Activated CD4-positive, alpha-beta memory T cell treated with anti-CD3 and anti-CD28 coated beads, Interleukin-2, amount 10 ng/mL, durations not matched to agents 7 days and 5 days (primary cell): ENCODE measurements at regions of chr17 and their contacts with region 1.

Region 1: GRCh38 chr17:74748529-74749365 is at the start of gene NHERF1:
- DNase-seq: peak; percentile 96
- H3K4me3 Mint-ChIP-seq: peak within 1 kb of the TSS; percentile 94
- H3K27ac Mint-ChIP-seq: peak within 1 kb of the TSS; percentile 85
- H3K4me1 Mint-ChIP-seq: peaks cover 61% of the 10 kb centered on the region
- H3K27me3 Mint-ChIP-seq: no peaks in the 10 kb centered on the region
- total RNA-seq, gene NHERF1: 320 to 328 TPM

Region 2: DNA sequence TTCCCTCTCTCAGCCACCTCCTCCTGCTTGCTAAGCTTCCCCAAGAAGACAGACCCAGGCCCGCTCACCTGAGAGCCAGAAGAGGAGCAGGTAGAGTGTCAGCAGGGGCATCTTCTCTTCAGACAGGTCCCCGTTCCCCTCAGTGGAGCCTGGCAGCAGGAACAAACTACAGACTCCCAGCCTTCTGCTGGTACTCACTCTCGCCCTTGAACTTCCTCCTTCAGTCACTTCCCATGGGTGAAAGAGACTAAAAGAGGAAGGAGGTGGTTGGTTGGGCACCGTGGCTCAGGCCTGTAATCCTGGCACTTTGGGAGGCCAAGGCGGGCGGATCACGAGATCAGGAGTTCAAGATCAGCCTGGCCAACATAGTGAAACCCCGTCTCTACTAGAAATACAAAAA is 36.0 kb before region 1 on chr17 and contains the start of gene CD300LF:
- CTCF ChIA-PET with region 1: no interaction called
- POLR2A ChIA-PET with region 1: no interaction called
- DNase-seq: no peak
- H3K4me3 Mint-ChIP-seq: no peak within 1 kb of the TSS
- H3K27ac Mint-ChIP-seq: no peak within 1 kb of the TSS
- H3K4me1 Mint-ChIP-seq: peaks cover 7% of the 10 kb centered on the region
- H3K27me3 Mint-ChIP-seq: peaks cover 36% of the 10 kb centered on the region
- total RNA-seq, gene CD300LF: not detected

Region 3: GRCh38 chr17:74759243-74759801 is 10.6 kb after region 1 on chr17:
- CTCF ChIA-PET with region 1: interaction called, 77 read pairs
- POLR2A ChIA-PET with region 1: interaction called, 98 read pairs
- DNase-seq: peak; percentile 82
- H3K4me3 Mint-ChIP-seq: peak overlapping the region; percentile 61
- H3K27ac Mint-ChIP-seq: peak overlapping the region; percentile 79
- H3K4me1 Mint-ChIP-seq: peaks cover 76% of the 10 kb centered on the region
- H3K27me3 Mint-ChIP-seq: no peaks in the 10 kb centered on the region

Region 4: DNA sequence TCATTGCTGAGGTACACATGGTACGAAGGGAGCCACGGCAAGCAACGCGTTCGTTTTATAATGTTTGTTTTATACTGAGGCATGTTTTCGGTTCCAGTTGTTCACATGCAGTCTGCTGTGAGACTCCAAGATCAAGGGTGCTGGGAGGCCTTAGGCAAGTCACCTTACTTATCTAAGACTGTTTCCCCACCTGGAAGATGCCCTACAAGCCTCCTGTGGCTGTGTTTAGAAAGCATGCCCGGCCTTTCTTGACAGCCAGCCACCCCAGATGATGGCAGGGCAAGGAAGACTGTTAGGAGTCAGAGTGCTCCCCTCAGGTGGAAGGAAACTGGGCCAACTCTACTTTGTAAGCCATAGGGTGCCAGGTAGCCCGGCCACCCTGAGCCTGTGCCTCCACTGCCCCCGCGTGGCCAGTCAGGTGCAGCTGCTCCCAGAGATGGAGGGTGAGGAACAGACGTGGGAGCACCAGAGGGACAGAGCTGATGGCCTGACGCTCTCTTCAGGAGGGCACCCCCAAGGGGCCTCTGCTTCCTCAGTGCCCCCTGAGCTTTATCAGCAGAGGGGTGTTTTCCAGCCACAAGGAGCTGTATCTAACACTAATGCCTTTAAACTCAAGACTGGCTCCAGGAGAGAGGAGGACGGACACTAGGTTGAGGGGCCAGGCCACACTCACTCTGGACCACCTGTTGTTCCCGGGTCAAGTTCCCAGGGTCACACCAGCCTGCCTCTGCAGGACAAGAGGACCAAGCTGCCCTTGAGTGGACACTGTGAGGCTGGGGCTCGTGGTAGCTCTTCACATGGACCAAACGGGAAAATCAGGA is 22.0 kb after region 1 on chr17:
- CTCF ChIA-PET with region 1: interaction called, 32 read pairs
- POLR2A ChIA-PET with region 1: interaction called, 28 read pairs
- DNase-seq: peak; percentile 78
- H3K4me3 Mint-ChIP-seq: no peak overlapping the region
- H3K27ac Mint-ChIP-seq: peak overlapping the region; percentile 48
- H3K4me1 Mint-ChIP-seq: peaks cover 42% of the 10 kb centered on the region
- H3K27me3 Mint-ChIP-seq: no peaks in the 10 kb centered on the region

Region 5: GRCh38 chr17:74776044-74776977 is 27.6 kb after region 1 on chr17 and contains the start of gene NAT9:
- CTCF ChIA-PET with region 1: interaction called, 32 read pairs
- POLR2A ChIA-PET with region 1: interaction called, 68 read pairs
- DNase-seq: peak; percentile 99
- H3K4me3 Mint-ChIP-seq: peak within 1 kb of the TSS; percentile 99
- H3K27ac Mint-ChIP-seq: peak within 1 kb of the TSS; percentile 85
- H3K4me1 Mint-ChIP-seq: peaks cover 68% of the 10 kb centered on the region
- H3K27me3 Mint-ChIP-seq: no peaks in the 10 kb centered on the region
- total RNA-seq, gene NAT9: 32.1 to 32.3 TPM

Region 6: DNA sequence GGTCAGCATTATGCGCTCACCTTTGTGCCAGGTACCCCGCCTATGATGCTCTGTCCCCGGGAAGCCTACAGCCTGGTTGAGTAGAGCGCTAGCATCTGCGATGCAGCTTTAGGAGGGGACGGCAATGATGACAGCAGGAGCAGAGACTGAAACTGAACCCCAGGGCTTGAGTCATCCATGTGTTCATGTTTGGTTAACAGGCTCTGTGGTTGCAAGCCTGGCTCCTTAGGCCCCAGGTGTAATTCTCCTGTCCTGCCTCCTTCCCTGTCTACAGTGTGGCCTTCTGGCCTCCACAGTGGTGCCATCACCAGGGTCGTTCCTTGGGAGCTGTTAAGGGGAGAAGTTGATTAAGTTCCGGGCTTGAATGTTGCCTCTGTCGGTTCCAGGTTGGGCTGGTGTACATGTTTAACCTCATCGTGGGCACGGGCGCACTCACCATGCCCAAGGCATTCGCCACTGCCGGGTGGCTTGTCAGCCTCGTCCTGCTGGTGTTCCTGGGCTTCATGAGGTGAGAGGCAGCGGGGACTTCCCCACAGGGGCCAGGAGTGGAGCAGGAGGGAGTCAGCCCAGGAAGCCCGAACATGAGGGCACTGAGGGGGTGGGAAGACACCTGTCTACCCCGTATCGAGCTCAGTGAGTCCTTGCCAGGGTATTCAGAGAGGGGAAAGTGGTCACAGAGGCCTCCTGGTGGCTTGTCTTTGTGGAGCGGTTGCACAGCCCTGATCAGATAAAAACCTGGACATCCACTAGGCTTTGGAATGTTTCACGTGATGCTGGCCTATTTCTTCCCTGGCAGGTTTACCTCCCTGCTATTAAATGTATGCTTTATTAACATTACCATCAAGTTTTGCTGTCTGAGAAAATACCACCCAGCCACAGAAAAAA is 36.6 kb after region 1 on chr17:
- CTCF ChIA-PET with region 1: interaction called, 30 read pairs
- POLR2A ChIA-PET with region 1: interaction called, 68 read pairs
- DNase-seq: peak; percentile 28
- H3K4me3 Mint-ChIP-seq: no peak overlapping the region
- H3K27ac Mint-ChIP-seq: peak overlapping the region; percentile 48
- H3K4me1 Mint-ChIP-seq: peaks cover 71% of the 10 kb centered on the region
- H3K27me3 Mint-ChIP-seq: no peaks in the 10 kb centered on the region

Region 7: DNA sequence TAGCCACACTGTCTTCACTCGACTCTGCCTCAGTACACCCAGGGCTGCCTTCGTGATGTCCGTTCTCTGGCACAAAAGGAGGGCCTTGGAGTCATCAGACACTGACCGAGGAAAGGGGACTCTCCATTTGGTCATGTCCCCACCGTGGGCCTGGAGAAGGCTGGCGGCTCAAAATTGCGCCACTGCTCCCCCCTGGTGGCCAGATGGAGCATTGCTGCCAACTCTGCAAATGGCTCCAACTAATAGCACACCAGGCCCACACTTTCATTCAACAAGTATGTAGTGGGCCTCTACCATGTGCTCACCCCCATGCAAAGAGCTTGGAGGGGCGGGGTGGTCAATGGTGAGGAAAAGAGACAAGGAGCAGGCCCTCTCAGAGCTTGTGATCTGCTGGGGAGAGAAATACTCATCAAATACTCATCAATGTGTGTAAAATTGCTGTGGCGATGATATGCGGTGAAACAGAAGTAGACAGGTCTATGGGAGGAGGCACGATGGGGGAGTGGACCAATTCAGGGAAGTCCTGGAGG is 116.2 kb after region 1 on chr17:
- CTCF ChIA-PET with region 1: interaction called, 15 read pairs
- POLR2A ChIA-PET with region 1: no interaction called
- DNase-seq: peak; percentile 77
- H3K4me3 Mint-ChIP-seq: no peak overlapping the region
- H3K27ac Mint-ChIP-seq: no peak overlapping the region
- H3K4me1 Mint-ChIP-seq: peaks cover 26% of the 10 kb centered on the region
- H3K27me3 Mint-ChIP-seq: peaks cover 19% of the 10 kb centered on the region

Region 8: GRCh38 chr17:74873038-74873873 is 124.5 kb after region 1 on chr17:
- CTCF ChIA-PET with region 1: interaction called, 4 read pairs
- POLR2A ChIA-PET with region 1: interaction called, 18 read pairs
- DNase-seq: peak; percentile 100
- H3K4me3 Mint-ChIP-seq: peak overlapping the region; percentile 96
- H3K27ac Mint-ChIP-seq: peak overlapping the region; percentile 86
- H3K4me1 Mint-ChIP-seq: peaks cover 40% of the 10 kb centered on the region
- H3K27me3 Mint-ChIP-seq: no peaks in the 10 kb centered on the region

Region 9: DNA sequence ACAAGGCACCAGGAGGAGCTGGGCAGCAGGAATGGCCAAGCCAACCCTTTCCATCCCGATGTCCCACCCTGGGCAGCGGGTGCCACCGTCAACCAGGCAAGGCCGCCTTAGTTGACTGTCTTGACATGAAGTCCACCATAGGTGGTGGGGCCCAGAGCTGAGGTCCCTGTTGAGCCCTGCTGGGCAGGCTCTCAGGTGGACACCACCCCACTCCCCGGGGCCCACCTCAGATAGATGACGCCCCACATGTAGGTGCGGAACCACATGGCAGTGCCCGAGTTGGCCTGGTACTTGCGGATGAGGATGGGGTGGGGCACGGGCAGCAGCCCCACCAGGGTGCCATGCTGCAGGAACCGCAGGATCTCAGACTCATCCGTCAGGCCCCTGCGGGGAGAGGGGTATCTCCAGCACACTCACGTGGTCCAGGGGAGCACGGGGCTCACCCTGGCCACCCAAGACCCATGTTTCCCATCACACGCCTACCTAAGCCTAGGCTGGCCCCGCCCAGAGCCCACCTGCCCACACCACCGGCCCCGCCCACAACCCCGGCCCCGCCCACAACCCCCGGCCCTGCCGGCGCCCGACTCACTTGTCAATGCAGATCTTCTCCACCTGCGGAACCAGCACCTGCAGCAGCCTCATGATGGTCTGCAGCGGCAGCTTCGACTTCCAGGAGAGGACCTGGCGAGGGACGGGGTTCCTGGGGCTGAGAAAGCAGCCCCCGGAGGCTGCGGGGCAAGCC is 203.1 kb after region 1 on chr17:
- CTCF ChIA-PET with region 1: no interaction called
- POLR2A ChIA-PET with region 1: no interaction called
- DNase-seq: no peak
- H3K4me3 Mint-ChIP-seq: no peak overlapping the region
- H3K27ac Mint-ChIP-seq: no peak overlapping the region
- H3K4me1 Mint-ChIP-seq: no peaks in the 10 kb centered on the region
- H3K27me3 Mint-ChIP-seq: no peaks in the 10 kb centered on the region